ENCODE measurements at regions of chr17 and their contacts with region 1.

Region 1: GRCh38 chr17:65055348-65056261 is 935 bp downstream of the GNA13 start:
- DNase-seq: peak; percentile 27 to 69 (median 40)
- ATAC-seq: peak; percentile 17
- H3K4me3 ChIP-seq: peak overlapping the region; percentile 94
- H3K4me3 Mint-ChIP-seq: peak overlapping the region; percentile 89 to 100 (median 96)
- H3K27ac ChIP-seq: peak overlapping the region; percentile 99
- H3K27ac Mint-ChIP-seq: peak overlapping the region; percentile 93 to 99 (median 96)
- H3K4me1 ChIP-seq: peaks cover 17 to 20% of the 10 kb centered on the region in 2 donors
- H3K4me1 Mint-ChIP-seq: peaks cover 33 to 58% (median 47%) of the 10 kb centered on the region in 7 donors
- H3K27me3 ChIP-seq: no peaks in the 10 kb centered on the region
- H3K27me3 Mint-ChIP-seq: peaks cover 0 to 10% (median 0%) of the 10 kb centered on the region in 5 donors

Region 2: GRCh38 chr17:64920026-64920418 is 135.6 kb before region 1 on chr17:
- CTCF ChIA-PET with region 1: no interaction called
- POLR2A ChIA-PET with region 1: interaction called, 4 read pairs
- intact Hi-C with region 1: loop called in 1 of 2 experiments (anchors 10 kb)
- DNase-seq: peak in 4 of 9 donors; percentile 11 to 26 (median 14)
- ATAC-seq: no peak
- H3K4me3 ChIP-seq: peak overlapping the region; percentile 62
- H3K4me3 Mint-ChIP-seq: peak overlapping the region; percentile 84 to 94 (median 88)
- H3K27ac ChIP-seq: peak overlapping the region; percentile 90
- H3K27ac Mint-ChIP-seq: peak overlapping the region; percentile 83 to 97 (median 92)
- H3K4me1 ChIP-seq: no peaks in the 10 kb centered on the region
- H3K4me1 Mint-ChIP-seq: peaks cover 0 to 22% (median 7%) of the 10 kb centered on the region in 7 donors
- H3K27me3 ChIP-seq: no peaks in the 10 kb centered on the region
- H3K27me3 Mint-ChIP-seq: peaks cover 0 to 4% (median 0%) of the 10 kb centered on the region in 5 donors

Region 3: GRCh38 chr17:64984851-64985521 is 70.6 kb before region 1 on chr17:
- CTCF ChIA-PET with region 1: interaction called, 5 read pairs
- POLR2A ChIA-PET with region 1: interaction called, 17 read pairs
- intact Hi-C with region 1: loop called (anchors 1 kb)
- DNase-seq: peak in 8 of 9 donors; percentile 37 to 86 (median 62)
- ATAC-seq: peak; percentile 60
- H3K4me3 ChIP-seq: peak overlapping the region; percentile 52
- H3K4me3 Mint-ChIP-seq: peak overlapping the region; percentile 76 to 96 (median 80)
- H3K27ac ChIP-seq: peak overlapping the region; percentile 88
- H3K27ac Mint-ChIP-seq: peak overlapping the region; percentile 96 to 100 (median 98)
- H3K4me1 ChIP-seq: peaks cover 24 to 35% of the 10 kb centered on the region in 2 donors
- H3K4me1 Mint-ChIP-seq: peaks cover 13 to 52% (median 32%) of the 10 kb centered on the region in 7 donors
- H3K27me3 ChIP-seq: no peaks in the 10 kb centered on the region
- H3K27me3 Mint-ChIP-seq: no peaks in the 10 kb centered on the region

Region 4: DNA sequence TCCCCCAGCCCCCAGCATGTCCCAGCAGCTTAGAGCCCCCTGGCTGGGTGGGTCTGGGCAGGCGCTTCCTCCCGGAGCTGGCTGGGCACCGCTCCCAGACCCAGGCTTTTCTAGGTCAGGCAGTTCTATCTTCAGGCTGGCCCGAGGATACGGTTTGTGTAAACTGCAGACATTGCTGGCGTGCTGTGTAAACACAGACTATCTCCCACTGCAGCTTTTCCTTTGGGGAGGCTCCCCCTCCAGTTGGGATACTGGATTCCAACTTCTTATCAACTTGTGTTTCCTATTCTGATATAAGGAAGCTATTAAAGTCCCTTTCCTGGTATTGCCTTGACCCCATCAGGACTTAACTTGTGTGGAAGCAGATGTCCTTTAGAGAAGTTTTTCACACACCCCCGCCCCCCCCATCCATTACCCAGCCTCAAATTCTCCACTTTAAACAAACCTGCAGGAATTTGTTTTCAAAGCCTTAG is 19.2 kb after region 1 on chr17:
- CTCF ChIA-PET with region 1: no interaction called
- POLR2A ChIA-PET with region 1: no interaction called
- intact Hi-C with region 1: no loop called
- DNase-seq: no peak
- ATAC-seq: no peak
- H3K4me3 ChIP-seq: no peak overlapping the region
- H3K4me3 Mint-ChIP-seq: no peak overlapping the region
- H3K27ac ChIP-seq: no peak overlapping the region
- H3K27ac Mint-ChIP-seq: no peak overlapping the region
- H3K4me1 ChIP-seq: no peaks in the 10 kb centered on the region
- H3K4me1 Mint-ChIP-seq: peaks cover 0 to 4% (median 0%) of the 10 kb centered on the region in 7 donors
- H3K27me3 ChIP-seq: no peaks in the 10 kb centered on the region
- H3K27me3 Mint-ChIP-seq: peaks cover 0 to 5% (median 0%) of the 10 kb centered on the region in 5 donors

Region 5: GRCh38 chr17:65100316-65101140 is 44.9 kb after region 1 on chr17:
- CTCF ChIA-PET with region 1: no interaction called
- POLR2A ChIA-PET with region 1: interaction called, 12 read pairs
- intact Hi-C with region 1: loop called (anchors 1 kb)
- DNase-seq: peak; percentile 61 to 87 (median 79)
- ATAC-seq: peak; percentile 96
- H3K4me3 ChIP-seq: peak overlapping the region; percentile 78
- H3K4me3 Mint-ChIP-seq: peak overlapping the region; percentile 77 to 92 (median 87)
- H3K27ac ChIP-seq: peak overlapping the region; percentile 66
- H3K27ac Mint-ChIP-seq: peak overlapping the region; percentile 62 to 93 (median 81)
- H3K4me1 ChIP-seq: peaks cover 6 to 10% of the 10 kb centered on the region in 2 donors
- H3K4me1 Mint-ChIP-seq: peaks cover 5 to 20% (median 17%) of the 10 kb centered on the region in 7 donors
- H3K27me3 ChIP-seq: no peaks in the 10 kb centered on the region
- H3K27me3 Mint-ChIP-seq: peaks cover 0 to 17% (median 0%) of the 10 kb centered on the region in 5 donors

Region 6: GRCh38 chr17:65198653-65199382 is 143.2 kb after region 1 on chr17:
- CTCF ChIA-PET with region 1: no interaction called
- POLR2A ChIA-PET with region 1: no interaction called
- intact Hi-C with region 1: loop called in 1 of 2 experiments (anchors 1 kb)
- DNase-seq: peak in 7 of 9 donors; percentile 36 to 67 (median 57)
- ATAC-seq: peak; percentile 79
- H3K4me3 ChIP-seq: no peak overlapping the region
- H3K4me3 Mint-ChIP-seq: no peak overlapping the region
- H3K27ac ChIP-seq: no peak overlapping the region
- H3K27ac Mint-ChIP-seq: no peak overlapping the region
- H3K4me1 ChIP-seq: no peaks in the 10 kb centered on the region
- H3K4me1 Mint-ChIP-seq: peaks cover 0 to 6% (median 0%) of the 10 kb centered on the region in 7 donors
- H3K27me3 ChIP-seq: no peaks in the 10 kb centered on the region
- H3K27me3 Mint-ChIP-seq: peaks cover 0 to 6% (median 0%) of the 10 kb centered on the region in 5 donors

Measured in naive thymus-derived CD4-positive, alpha-beta T cell (primary cell).